ENCODE measurements at regions of chr9 and their contacts with region 1.

Region 1: GRCh38 chr9:137034863-137035761 is 3.2 kb upstream of the FUT7 start:
- DNase-seq: peak; percentile 82
- H3K4me3 ChIP-seq: no peak overlapping the region
- H3K27ac ChIP-seq: no peak overlapping the region
- H3K4me1 ChIP-seq: no peaks in the 10 kb centered on the region
- H3K27me3 ChIP-seq: no peaks in the 10 kb centered on the region
- CTCF ChIP-seq: peak; percentile 91 to 97
- POLR2A ChIP-seq: no peak

Region 2: GRCh38 chr9:136790927-136791641 is 244.0 kb before region 1 on chr9 and contains the start of gene TMEM141:
- CTCF ChIA-PET with region 1: interaction called, 19 read pairs
- POLR2A ChIA-PET with region 1: no interaction called
- dilution Hi-C with region 1: no loop called
- intact Hi-C with region 1: loop called (anchors 1 kb)
- DNase-seq: peak; percentile 99
- H3K4me3 ChIP-seq: peak within 1 kb of the TSS; percentile 54 to 72 (median 59)
- H3K27ac ChIP-seq: peak within 1 kb of the TSS; percentile 31
- H3K4me1 ChIP-seq: peaks cover 7% of the 10 kb centered on the region
- H3K27me3 ChIP-seq: peaks cover 2 to 6% of the 10 kb centered on the region in 2 experiments
- CTCF ChIP-seq: no peak
- POLR2A ChIP-seq: peak; percentile 89
- total RNA-seq, gene TMEM141: 43.2 and 44.9 TPM in 2 replicates

Region 3: GRCh38 chr9:136949817-136950655 is 85.1 kb before region 1 on chr9:
- CTCF ChIA-PET with region 1: interaction called, 111 read pairs
- POLR2A ChIA-PET with region 1: interaction called, 4 read pairs
- dilution Hi-C with region 1: no loop called
- intact Hi-C with region 1: loop called (anchors 1 kb)
- DNase-seq: peak; percentile 93
- H3K4me3 ChIP-seq: peak overlapping the region; percentile 4 to 77 (median 9)
- H3K27ac ChIP-seq: no peak overlapping the region
- H3K4me1 ChIP-seq: peaks cover 5% of the 10 kb centered on the region
- H3K27me3 ChIP-seq: no peaks in the 10 kb centered on the region
- CTCF ChIP-seq: no peak
- POLR2A ChIP-seq: peak; percentile 57

Region 4: DNA sequence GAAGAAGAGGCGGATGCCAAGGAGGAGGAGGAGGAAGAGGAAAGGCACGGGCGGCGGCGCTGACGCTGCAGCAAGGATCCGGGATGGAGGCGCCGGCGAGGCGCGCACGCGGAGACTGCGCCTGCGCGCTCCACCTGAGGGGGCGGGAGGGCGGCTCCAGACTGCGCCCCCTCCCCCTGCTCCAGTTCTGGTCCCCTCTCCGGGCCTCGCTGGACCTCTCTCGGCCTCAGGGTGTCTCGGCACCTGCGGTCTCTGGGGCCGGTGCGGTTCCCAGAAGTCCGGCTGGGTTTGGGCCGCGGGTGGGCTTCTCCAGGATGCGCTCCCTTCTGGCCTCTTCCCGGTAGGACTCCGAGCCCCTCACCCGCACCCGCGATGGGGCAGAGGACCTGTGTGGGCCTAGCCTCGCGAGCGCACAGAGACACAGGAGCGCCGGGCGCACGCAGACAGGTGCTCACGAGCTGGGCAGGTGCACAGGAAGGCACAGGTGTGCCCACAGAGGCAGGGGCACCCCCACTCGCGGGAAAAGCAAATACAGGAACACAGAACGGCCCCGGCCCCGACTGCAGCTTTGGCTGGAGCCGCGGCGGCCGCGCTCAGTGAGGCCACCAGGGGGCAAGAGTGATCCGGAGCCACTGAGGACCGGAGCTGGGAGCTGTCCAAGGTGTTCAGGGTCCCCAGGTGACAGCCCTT is 11.1 kb after region 1 on chr9 and contains the start of gene NPDC1:
- CTCF ChIA-PET with region 1: interaction called, 58 read pairs
- POLR2A ChIA-PET with region 1: no interaction called
- dilution Hi-C with region 1: no loop called
- intact Hi-C with region 1: no loop called
- DNase-seq: peak; percentile 79
- H3K4me3 ChIP-seq: peak within 1 kb of the TSS; percentile 44 to 57 (median 54)
- H3K27ac ChIP-seq: peak within 1 kb of the TSS; percentile 41
- H3K4me1 ChIP-seq: peaks cover 35% of the 10 kb centered on the region
- H3K27me3 ChIP-seq: peaks cover 0 to 3% of the 10 kb centered on the region in 2 experiments
- CTCF ChIP-seq: peak; percentile 94 to 96
- POLR2A ChIP-seq: peak; percentile 63
- total RNA-seq, gene NPDC1: 157 and 181 TPM in 2 replicates

Region 5: GRCh38 chr9:137236238-137236935 is 201.3 kb after region 1 on chr9:
- CTCF ChIA-PET with region 1: no interaction called
- POLR2A ChIA-PET with region 1: no interaction called
- dilution Hi-C with region 1: no loop called
- intact Hi-C with region 1: no loop called
- DNase-seq: peak; percentile 77
- H3K4me3 ChIP-seq: no peak overlapping the region
- H3K27ac ChIP-seq: no peak overlapping the region
- H3K4me1 ChIP-seq: no peaks in the 10 kb centered on the region
- H3K27me3 ChIP-seq: no peaks in the 10 kb centered on the region
- CTCF ChIP-seq: peak; percentile 97 to 99
- POLR2A ChIP-seq: no peak